ENCODE measurements at regions of chr11 and their contacts with region 1.

Region 1: DNA sequence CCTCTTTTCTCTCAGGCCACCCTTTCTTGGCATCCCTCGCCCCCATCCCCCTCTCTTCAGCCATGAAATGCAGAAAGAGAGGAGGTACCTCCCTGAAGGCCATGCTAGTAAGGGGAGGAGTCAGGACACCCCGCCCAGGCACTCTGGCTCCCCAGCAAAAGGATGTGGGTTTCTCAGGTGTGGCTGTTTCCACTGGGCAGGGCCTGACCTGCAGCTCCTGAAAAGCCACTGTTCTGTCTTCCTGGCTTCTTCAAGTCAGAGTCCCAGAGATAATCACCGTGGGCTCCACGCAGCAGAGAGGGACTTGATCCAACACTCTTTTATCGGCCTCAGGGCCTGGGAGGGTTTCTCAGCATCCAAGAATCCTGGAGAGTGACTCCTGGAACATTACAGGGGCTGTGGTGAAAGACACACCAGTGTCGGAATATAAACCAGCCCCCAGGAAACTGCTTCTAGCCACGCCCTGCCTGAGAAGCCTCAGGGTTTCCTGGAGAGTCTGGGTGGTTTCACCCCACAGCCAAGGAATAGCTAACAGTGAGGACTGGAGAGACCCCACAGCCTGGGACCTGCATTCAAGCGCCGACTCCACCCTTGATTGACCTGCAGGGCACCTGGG is 45.7 kb upstream of the TSPAN18 start:
- DNase-seq: peak; percentile 73
- H3K4me3 Mint-ChIP-seq: peak overlapping the region; percentile 67
- H3K27ac Mint-ChIP-seq: peak overlapping the region; percentile 75
- H3K4me1 Mint-ChIP-seq: peaks cover 34% of the 10 kb centered on the region
- H3K27me3 Mint-ChIP-seq: no peaks in the 10 kb centered on the region

Region 2: DNA sequence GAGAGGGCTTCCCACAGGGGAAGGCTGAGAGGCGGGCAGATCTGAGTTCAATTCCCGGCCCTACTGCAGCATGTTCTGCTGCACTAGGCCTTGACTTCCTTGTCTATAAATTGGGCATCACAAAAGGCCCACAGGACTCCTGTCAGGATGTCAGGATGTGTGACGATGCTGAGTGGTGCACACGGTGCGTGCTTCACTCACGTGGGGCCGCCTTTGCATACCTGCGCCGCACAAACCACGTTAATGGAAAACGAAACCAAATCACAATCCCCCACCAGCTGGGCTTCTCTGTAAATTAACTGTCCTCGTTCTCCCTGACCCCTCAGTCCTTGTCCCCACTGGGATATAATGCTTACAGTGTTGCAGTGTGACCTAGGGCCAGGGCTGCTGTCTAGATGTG is 13.4 kb after region 1 on chr11:
- intact Hi-C with region 1: loop called (anchors 2 kb)
- DNase-seq: no peak
- H3K4me3 Mint-ChIP-seq: no peak overlapping the region
- H3K27ac Mint-ChIP-seq: no peak overlapping the region
- H3K4me1 Mint-ChIP-seq: peaks cover 6% of the 10 kb centered on the region
- H3K27me3 Mint-ChIP-seq: peaks cover 6% of the 10 kb centered on the region

Measured in activated T-helper 1 cell treated with anti-CD3 and anti-CD28 coated beads, Interleukin-12 subunit alpha, Interleukin-12 subunit beta, Interleukin-2, Interleukin-4 antibody, amounts not matched to agents 30 ng/mL and 10 ng/mL and 1 ng/mL, durations not matched to agents 14 hours and 24 hours and 36 hours (primary cell).